ENCODE measurements at regions of chr17 and their contacts with region 1.

Region 1: DNA sequence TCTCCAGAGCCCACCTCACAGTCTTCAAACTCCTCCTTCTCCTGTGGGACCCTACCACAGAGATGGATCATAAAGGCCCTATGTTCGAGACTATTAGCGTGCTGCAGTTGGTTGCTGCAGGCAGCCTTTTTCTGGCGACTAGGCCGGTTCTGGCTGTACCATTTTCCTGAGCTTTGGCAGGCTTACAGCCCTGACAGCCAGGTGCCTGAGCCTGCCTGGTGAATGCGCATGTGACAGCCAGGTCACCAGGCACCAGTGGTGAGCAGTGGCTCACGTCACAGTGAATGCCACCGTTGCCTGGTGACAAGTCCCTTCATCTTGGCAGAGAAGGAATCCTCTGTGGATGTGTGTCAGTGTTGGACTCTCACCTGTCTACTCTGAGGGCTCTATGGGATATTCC is 978.8 kb downstream of the KCNJ18 start:
- DNase-seq: no peak
- H3K4me3 ChIP-seq: no peak overlapping the region
- H3K27ac ChIP-seq: no peak overlapping the region
- H3K4me1 ChIP-seq: no peaks in the 10 kb centered on the region
- H3K27me3 ChIP-seq: no peaks in the 10 kb centered on the region
- CTCF ChIP-seq: no peak
- EP300 ChIP-seq: no peak
- POLR2A ChIP-seq: no peak

Region 2: DNA sequence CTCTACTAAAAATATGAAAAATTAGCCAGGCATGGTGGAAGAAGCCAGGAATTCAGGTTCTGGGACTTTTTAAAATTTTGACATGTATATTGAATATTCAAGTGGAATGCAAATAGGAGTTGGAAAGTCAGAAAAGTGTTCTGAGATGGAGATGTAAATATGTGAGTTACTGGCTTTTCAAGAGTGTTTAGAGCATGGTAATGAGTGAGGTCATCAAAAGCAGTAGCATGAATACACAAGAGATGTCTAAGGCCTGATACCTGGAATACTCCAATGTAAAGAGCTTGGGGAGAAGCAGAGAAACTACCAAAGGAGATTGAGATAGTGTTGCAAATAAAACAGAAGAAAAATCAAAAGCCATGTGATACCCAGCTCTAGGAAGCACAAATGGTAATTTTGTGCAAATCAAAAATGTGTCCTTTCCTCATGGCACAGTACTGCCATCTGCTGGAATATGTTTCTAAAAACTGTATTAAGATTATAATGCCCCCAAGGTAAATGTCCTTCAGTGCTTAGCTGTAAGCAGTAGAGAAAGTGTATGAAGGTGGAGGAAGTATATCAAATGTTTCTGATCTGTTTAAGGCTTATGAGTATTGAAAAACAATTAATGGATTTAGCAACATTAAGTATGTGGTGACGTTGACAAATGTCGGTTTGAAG is 70.3 kb before region 1 on chr17:
- intact Hi-C with region 1: no loop called
- DNase-seq: peak in 1 of 2 donors; percentile 2
- H3K4me3 ChIP-seq: no peak overlapping the region
- H3K27ac ChIP-seq: no peak overlapping the region
- H3K4me1 ChIP-seq: no peaks in the 10 kb centered on the region
- H3K27me3 ChIP-seq: no peaks in the 10 kb centered on the region
- CTCF ChIP-seq: no peak
- EP300 ChIP-seq: no peak
- POLR2A ChIP-seq: no peak

Region 3: GRCh38 chr17:22717211-22717610 is 46.1 kb after region 1 on chr17:
- intact Hi-C with region 1: loop called (anchors 5 kb)
- DNase-seq: no peak
- H3K4me3 ChIP-seq: no peak overlapping the region
- H3K27ac ChIP-seq: no peak overlapping the region
- H3K4me1 ChIP-seq: no peaks in the 10 kb centered on the region
- H3K27me3 ChIP-seq: no peaks in the 10 kb centered on the region
- CTCF ChIP-seq: no peak
- EP300 ChIP-seq: no peak
- POLR2A ChIP-seq: no peak